Mammary epithelial cell (primary cell): ENCODE measurements at regions of chr10 and their contacts with region 1.

Region 1: GRCh38 chr10:35889971-35890677 is 248.0 kb upstream of the FZD8 start:
- DNase-seq: no peak
- H3K4me3 ChIP-seq: no peak overlapping the region
- H3K27ac ChIP-seq: no peak overlapping the region
- H3K4me1 ChIP-seq: peaks cover 16% of the 10 kb centered on the region
- H3K27me3 ChIP-seq: no peaks in the 10 kb centered on the region
- CTCF ChIP-seq: no peak

Region 2: GRCh38 chr10:35843524-35844181 is 46.5 kb before region 1 on chr10:
- CTCF ChIA-PET with region 1: no interaction called
- dilution Hi-C with region 1: loop called (anchors 5 kb)
- in situ Hi-C with region 1: no loop called
- intact Hi-C with region 1: no loop called
- DNase-seq: no peak
- H3K4me3 ChIP-seq: no peak overlapping the region
- H3K27ac ChIP-seq: no peak overlapping the region
- H3K4me1 ChIP-seq: no peaks in the 10 kb centered on the region
- H3K27me3 ChIP-seq: no peaks in the 10 kb centered on the region
- CTCF ChIP-seq: no peak